Prostate gland (tissue), 2 donors: ENCODE measurements at regions of chr1 and their contacts with region 1.

Region 1: DNA sequence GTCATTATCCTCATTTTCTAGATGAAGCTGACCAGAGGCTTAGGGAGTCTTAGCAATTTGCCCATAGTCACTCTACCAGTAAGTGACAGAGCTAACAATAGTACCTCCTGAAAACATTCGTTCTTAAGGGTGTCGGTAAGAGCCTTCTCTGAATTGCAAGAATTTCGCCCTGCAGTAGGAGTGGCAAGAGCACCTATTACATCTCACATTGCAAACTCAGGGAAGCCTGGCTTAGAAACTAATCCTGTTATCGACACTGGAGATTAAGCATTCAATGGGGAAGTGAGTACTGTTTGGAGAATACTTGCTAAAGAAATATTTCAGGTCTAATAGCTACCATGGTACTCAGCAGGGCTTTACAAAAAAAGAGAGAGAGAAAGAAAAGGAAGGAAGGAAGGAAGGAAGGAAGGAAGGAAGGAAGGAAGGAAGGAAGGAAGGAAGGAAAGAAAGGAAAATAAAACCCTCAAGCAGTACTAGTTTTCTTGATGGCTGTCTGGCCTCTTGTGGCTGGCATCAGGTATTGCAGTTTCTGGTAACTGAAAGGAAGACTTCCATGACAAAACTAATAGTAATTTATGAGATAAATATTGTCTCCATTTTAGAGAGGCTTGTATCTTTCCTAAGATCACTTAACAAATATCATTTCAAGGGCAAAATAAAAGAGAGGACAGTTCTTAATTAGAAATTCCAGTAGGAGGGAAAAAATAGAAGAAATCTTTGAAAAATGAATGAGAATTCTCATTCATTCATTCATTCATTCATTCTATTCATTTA is 10.4 kb downstream of the C1orf226 start:
- DNase-seq: peak; percentile 31
- H3K4me3 ChIP-seq: no peak overlapping the region
- H3K27ac ChIP-seq: no peak overlapping the region
- H3K4me1 ChIP-seq: no peaks in the 10 kb centered on the region
- H3K27me3 ChIP-seq: no peaks in the 10 kb centered on the region
- CTCF ChIP-seq: peak; percentile 26 to 86 (median 76)
- POLR2A ChIP-seq: no peak

Region 2: DNA sequence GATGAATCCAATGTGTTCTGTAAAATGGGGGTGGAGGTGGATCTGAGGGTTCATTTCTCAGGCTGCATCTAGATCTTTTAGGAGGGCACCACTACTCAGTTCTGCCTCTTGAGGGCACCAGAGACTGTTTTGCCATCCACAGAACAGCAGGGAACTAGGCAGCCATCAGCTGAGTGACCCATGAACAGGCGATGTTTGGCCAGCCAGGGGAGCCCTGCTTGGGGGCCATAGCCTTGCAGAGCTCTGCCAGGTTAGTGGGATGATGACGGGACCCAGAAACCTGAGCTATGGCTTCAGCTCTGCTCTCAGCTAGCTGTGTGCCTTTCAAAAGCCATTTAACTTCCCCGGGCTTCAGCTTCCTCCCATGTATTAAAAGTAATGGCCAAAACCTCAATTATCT is 335.9 kb before region 1 on chr1:
- intact Hi-C with region 1: loop called (anchors 2 kb)
- DNase-seq: peak; percentile 66
- H3K4me3 ChIP-seq: no peak overlapping the region
- H3K27ac ChIP-seq: no peak overlapping the region
- H3K4me1 ChIP-seq: no peaks in the 10 kb centered on the region
- H3K27me3 ChIP-seq: no peaks in the 10 kb centered on the region
- CTCF ChIP-seq: peak; percentile 72 to 89 (median 84)
- POLR2A ChIP-seq: no peak

Region 3: GRCh38 chr1:162213281-162213912 is 178.6 kb before region 1 on chr1:
- intact Hi-C with region 1: loop called (anchors 10 kb)
- DNase-seq: peak; percentile 94
- H3K4me3 ChIP-seq: no peak overlapping the region
- H3K27ac ChIP-seq: peak overlapping the region; percentile 53 to 60
- H3K4me1 ChIP-seq: peaks cover 1% of the 10 kb centered on the region
- H3K27me3 ChIP-seq: no peaks in the 10 kb centered on the region
- CTCF ChIP-seq: no peak
- POLR2A ChIP-seq: no peak

Region 4: DNA sequence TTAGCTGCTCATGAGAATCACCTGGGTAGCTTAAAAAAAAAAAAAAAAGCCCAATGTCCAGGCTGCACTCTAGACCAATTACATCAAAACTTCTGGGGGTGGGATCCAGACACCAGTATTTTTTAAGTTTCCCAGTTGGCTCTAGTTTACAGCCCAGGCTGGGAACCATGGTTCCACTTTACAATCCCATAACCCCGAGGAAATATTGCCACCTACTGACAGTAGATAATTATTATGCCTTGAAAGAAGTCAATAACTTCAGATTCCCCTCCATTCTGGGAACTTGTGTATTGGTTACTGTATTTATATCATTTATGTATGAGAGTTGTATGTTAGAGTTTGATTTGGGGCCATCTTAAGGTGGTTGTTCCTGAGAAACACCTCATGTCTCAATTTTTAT is 115.5 kb before region 1 on chr1:
- intact Hi-C with region 1: loop called (anchors 10 kb)
- DNase-seq: peak; percentile 15
- H3K4me3 ChIP-seq: no peak overlapping the region
- H3K27ac ChIP-seq: no peak overlapping the region
- H3K4me1 ChIP-seq: no peaks in the 10 kb centered on the region
- H3K27me3 ChIP-seq: no peaks in the 10 kb centered on the region
- CTCF ChIP-seq: peak in 3 of 4 experiments; percentile 37 to 51 (median 50)
- POLR2A ChIP-seq: no peak